HepG2 (cell line): ENCODE measurements at regions of chr2 and their contacts with region 1.

Region 1: DNA sequence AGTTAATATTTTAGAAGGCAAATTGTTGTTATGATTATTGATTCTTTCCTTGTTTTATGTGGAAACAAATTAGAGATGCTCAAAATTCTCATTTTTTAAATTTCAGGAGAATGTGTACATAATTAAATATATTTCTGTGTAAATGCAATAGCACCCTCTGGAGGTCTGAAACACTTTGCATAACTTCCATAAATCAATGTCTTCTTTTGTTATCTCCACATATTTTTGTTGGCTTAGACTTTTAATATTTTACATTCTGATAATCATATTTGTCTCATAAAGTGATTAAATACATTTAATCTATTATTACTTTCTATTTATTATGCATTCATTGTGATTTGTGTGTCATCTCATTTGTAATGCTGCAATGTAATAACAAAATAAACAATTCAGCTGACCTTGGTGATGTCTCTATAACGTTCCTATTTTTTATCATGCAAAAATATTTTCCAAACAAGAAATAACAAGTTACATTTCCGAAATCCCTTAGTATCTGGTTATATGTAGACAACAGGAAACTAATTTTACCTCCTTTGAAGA is 201.8 kb upstream of the GALNT5 start:
- DNase-seq: peak; percentile 27
- ATAC-seq: no peak
- H3K4me3 ChIP-seq: no peak overlapping the region
- H3K27ac ChIP-seq: no peak overlapping the region
- H3K4me1 ChIP-seq: peaks cover 13% of the 10 kb centered on the region
- H3K27me3 ChIP-seq: no peaks in the 10 kb centered on the region
- CTCF ChIP-seq: peak; percentile 18; the same call in 1 of the 2 replicates
- EP300 ChIP-seq: no peak
- POLR2A ChIP-seq: no peak
- RAD21 ChIP-seq: no peak

Region 2: GRCh38 chr2:156332534-156333273 is 723.0 kb before region 1 on chr2 and contains the start of gene NR4A2:
- CTCF ChIA-PET with region 1: no interaction called
- POLR2A ChIA-PET with region 1: no interaction called
- in situ Hi-C with region 1: no loop called
- intact Hi-C with region 1: loop called (anchors 10 kb)
- DNase-seq: peak; percentile 16
- ATAC-seq: peak; percentile 60
- H3K4me3 ChIP-seq: peak within 1 kb of the TSS; percentile 51 to 77 (median 63)
- H3K27ac ChIP-seq: no peak within 1 kb of the TSS
- H3K4me1 ChIP-seq: peaks cover 30% of the 10 kb centered on the region
- H3K27me3 ChIP-seq: peaks cover 23 to 75% of the 10 kb centered on the region in 2 experiments
- CTCF ChIP-seq: no peak
- EP300 ChIP-seq: no peak
- POLR2A ChIP-seq: no peak
- RAD21 ChIP-seq: no peak
- total RNA-seq, gene NR4A2: not detected in 2 replicates

Region 3: GRCh38 chr2:156400706-156401678 is 654.7 kb before region 1 on chr2:
- CTCF ChIA-PET with region 1: no interaction called
- POLR2A ChIA-PET with region 1: no interaction called
- in situ Hi-C with region 1: no loop called
- intact Hi-C with region 1: loop called (anchors 2 kb)
- DNase-seq: peak; percentile 76
- ATAC-seq: peak; percentile 75
- H3K4me3 ChIP-seq: peak overlapping the region; percentile 72 to 97 (median 83)
- H3K27ac ChIP-seq: peak overlapping the region; percentile 38
- H3K4me1 ChIP-seq: peaks cover 36% of the 10 kb centered on the region
- H3K27me3 ChIP-seq: peaks cover 0 to 8% of the 10 kb centered on the region in 2 experiments; a peak in 1 of 5 replicates
- CTCF ChIP-seq: no peak
- EP300 ChIP-seq: no peak; a peak in 1 of 4 replicates
- POLR2A ChIP-seq: no peak
- RAD21 ChIP-seq: no peak

Region 4: GRCh38 chr2:156837635-156838370 is 217.9 kb before region 1 on chr2:
- CTCF ChIA-PET with region 1: no interaction called
- POLR2A ChIA-PET with region 1: no interaction called
- in situ Hi-C with region 1: no loop called
- intact Hi-C with region 1: loop called (anchors 10 kb)
- DNase-seq: no peak
- ATAC-seq: no peak
- H3K4me3 ChIP-seq: no peak overlapping the region
- H3K27ac ChIP-seq: no peak overlapping the region
- H3K4me1 ChIP-seq: no peaks in the 10 kb centered on the region
- H3K27me3 ChIP-seq: no peaks in the 10 kb centered on the region
- CTCF ChIP-seq: no peak
- EP300 ChIP-seq: no peak
- POLR2A ChIP-seq: no peak
- RAD21 ChIP-seq: no peak

Region 5: GRCh38 chr2:157194097-157194688 is 138.5 kb after region 1 on chr2:
- CTCF ChIA-PET with region 1: no interaction called
- POLR2A ChIA-PET with region 1: no interaction called
- in situ Hi-C with region 1: no loop called
- intact Hi-C with region 1: loop called (anchors 5 kb)
- DNase-seq: peak; percentile 46
- ATAC-seq: peak; percentile 70
- H3K4me3 ChIP-seq: no peak overlapping the region
- H3K27ac ChIP-seq: no peak overlapping the region
- H3K4me1 ChIP-seq: no peaks in the 10 kb centered on the region
- H3K27me3 ChIP-seq: no peaks in the 10 kb centered on the region; a peak in 1 of 5 replicates
- CTCF ChIP-seq: peak; percentile 71
- EP300 ChIP-seq: no peak
- POLR2A ChIP-seq: no peak
- RAD21 ChIP-seq: 0 out of 2 replicates have a peak, but pooled peaks have one; percentile 34

Region 6: GRCh38 chr2:157221394-157221988 is 165.8 kb after region 1 on chr2:
- CTCF ChIA-PET with region 1: no interaction called
- POLR2A ChIA-PET with region 1: no interaction called
- in situ Hi-C with region 1: no loop called
- intact Hi-C with region 1: no loop called
- DNase-seq: no peak
- ATAC-seq: no peak
- H3K4me3 ChIP-seq: no peak overlapping the region
- H3K27ac ChIP-seq: no peak overlapping the region
- H3K4me1 ChIP-seq: no peaks in the 10 kb centered on the region
- H3K27me3 ChIP-seq: no peaks in the 10 kb centered on the region
- CTCF ChIP-seq: no peak
- EP300 ChIP-seq: no peak
- POLR2A ChIP-seq: no peak
- RAD21 ChIP-seq: no peak